Heart right ventricle (tissue), 16 donors: ENCODE measurements at regions of chr19 and their contacts with region 1.

Region 1: GRCh38 chr19:12400633-12401502 is at the start of gene ZNF799:
- DNase-seq: peak; percentile 97 to 99
- ATAC-seq: peak; percentile 99 to 100 (median 99)
- H3K4me3 ChIP-seq: peak within 1 kb of the TSS; percentile 61 to 94 (median 88)
- H3K27ac ChIP-seq: peak within 1 kb of the TSS; percentile 16 to 95 (median 87)
- H3K4me1 ChIP-seq: peaks cover 0 to 16% (median 7%) of the 10 kb centered on the region in 9 donors
- H3K27me3 ChIP-seq: no peaks in the 10 kb centered on the region
- CTCF ChIP-seq: peak in 4 of 9 donors; percentile 17 to 37 (median 26)
- total RNA-seq, gene ZNF799: 1.6 to 2.9 (median 2.0) TPM

Region 2: GRCh38 chr19:12333162-12334159 is 67.4 kb before region 1 on chr19 and contains the start of gene ZNF563:
- intact Hi-C with region 1: loop called in 1 of 10 experiments (anchors 2 kb)
- DNase-seq: peak; percentile 97 to 98
- ATAC-seq: peak; percentile 99 to 100 (median 99)
- H3K4me3 ChIP-seq: peak within 1 kb of the TSS; percentile 77 to 98 (median 87)
- H3K27ac ChIP-seq: peak within 1 kb of the TSS; percentile 74 to 98 (median 92)
- H3K4me1 ChIP-seq: peaks cover 0 to 29% (median 18%) of the 10 kb centered on the region in 9 donors
- H3K27me3 ChIP-seq: no peaks in the 10 kb centered on the region
- CTCF ChIP-seq: peak in 1 of 9 donors; percentile 5
- total RNA-seq, gene ZNF563: 2.1 to 6.2 (median 4.5) TPM

Region 3: GRCh38 chr19:12425236-12425887 is 24.5 kb after region 1 on chr19:
- intact Hi-C with region 1: no loop called
- DNase-seq: no peak
- ATAC-seq: no peak
- H3K4me3 ChIP-seq: no peak overlapping the region
- H3K27ac ChIP-seq: no peak overlapping the region
- H3K4me1 ChIP-seq: no peaks in the 10 kb centered on the region
- H3K27me3 ChIP-seq: no peaks in the 10 kb centered on the region
- CTCF ChIP-seq: no peak

Region 4: GRCh38 chr19:12440541-12441316 is 39.9 kb after region 1 on chr19 and contains the start of gene ZNF443:
- intact Hi-C with region 1: loop called in 3 of 10 experiments (anchors 2 to 5 kb)
- DNase-seq: peak; percentile 99
- ATAC-seq: peak; percentile 100
- H3K4me3 ChIP-seq: peak within 1 kb of the TSS; percentile 33 to 95 (median 71)
- H3K27ac ChIP-seq: peak within 1 kb of the TSS in 9 of 10 donors; percentile 72 to 83 (median 80)
- H3K4me1 ChIP-seq: peaks cover 0 to 12% (median 0%) of the 10 kb centered on the region in 9 donors
- H3K27me3 ChIP-seq: no peaks in the 10 kb centered on the region
- CTCF ChIP-seq: peak in 4 of 9 donors; percentile 12 to 24 (median 17)
- total RNA-seq, gene ZNF443: 1.2 to 3.4 (median 2.5) TPM

Region 5: DNA sequence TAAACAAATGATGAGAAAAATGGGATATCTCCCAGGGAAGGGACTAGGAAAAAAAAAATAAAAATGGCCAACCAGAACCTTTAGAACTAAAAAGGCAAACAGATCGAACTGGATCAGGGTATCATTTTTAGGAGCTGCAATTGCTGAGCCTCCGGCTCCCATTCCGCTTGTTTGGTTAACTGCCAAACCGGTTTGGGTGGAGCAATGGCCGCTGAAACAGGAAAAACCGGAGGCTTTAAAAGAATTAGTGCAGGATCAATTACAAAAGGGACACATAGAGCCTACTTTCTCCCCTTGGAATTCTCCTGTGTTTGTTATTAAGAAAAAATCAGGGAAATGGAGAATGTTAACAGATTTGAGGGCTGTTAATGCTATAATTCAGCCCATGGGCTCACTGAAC is 52.6 kb after region 1 on chr19:
- intact Hi-C with region 1: no loop called
- DNase-seq: no peak
- ATAC-seq: no peak
- H3K4me3 ChIP-seq: peak overlapping the region in 1 of 10 donors; percentile 0
- H3K27ac ChIP-seq: peak overlapping the region in 3 of 10 donors; percentile 37 to 64 (median 62)
- H3K4me1 ChIP-seq: peaks cover 0 to 11% (median 0%) of the 10 kb centered on the region in 9 donors
- H3K27me3 ChIP-seq: no peaks in the 10 kb centered on the region
- CTCF ChIP-seq: no peak

Region 6: DNA sequence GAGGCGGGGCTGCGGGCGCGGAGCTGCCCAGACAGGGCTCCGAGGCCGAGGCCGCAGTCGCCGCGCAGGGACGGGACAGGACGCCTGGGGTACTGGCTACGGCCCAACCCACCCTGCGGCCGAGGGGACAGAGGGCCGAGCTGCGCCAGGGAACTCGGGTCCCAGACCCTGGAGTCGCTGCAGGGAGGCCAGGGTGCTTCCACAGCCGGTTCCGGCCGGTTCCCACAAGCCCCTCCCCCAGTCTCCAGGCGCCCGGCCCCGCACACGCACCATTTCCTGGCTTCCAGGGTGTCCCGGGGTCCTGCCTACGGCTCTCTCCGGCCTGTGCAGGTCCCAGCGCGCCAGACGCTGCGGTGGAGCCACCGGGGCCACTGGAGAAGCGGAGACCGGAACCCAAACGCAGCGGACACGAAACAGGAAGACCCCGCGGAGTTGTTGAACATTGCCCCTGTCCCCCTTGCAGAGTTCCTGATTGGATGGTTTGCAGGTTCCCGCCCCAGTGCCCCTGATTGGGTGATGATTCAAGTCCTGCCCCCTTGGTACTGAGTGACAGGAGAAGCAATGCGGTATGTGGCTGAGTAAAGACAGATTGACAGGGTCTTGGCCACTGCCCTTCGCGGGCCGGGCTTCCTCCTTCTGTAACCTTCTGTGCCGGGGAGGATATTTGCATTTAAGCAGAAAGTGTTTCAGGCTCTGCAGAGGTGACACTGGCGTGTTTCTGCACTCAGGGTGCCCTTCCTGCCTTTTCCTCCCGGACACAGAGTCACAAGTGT is 150.4 kb after region 1 on chr19 and contains the start of gene ZNF564:
- intact Hi-C with region 1: loop called in 1 of 10 experiments (anchors 1 kb)
- DNase-seq: peak; percentile 89 to 98
- ATAC-seq: peak; percentile 97 to 99 (median 98)
- H3K4me3 ChIP-seq: peak within 1 kb of the TSS; percentile 68 to 95 (median 79)
- H3K27ac ChIP-seq: peak within 1 kb of the TSS; percentile 94 to 98 (median 95)
- H3K4me1 ChIP-seq: peaks cover 3 to 55% (median 37%) of the 10 kb centered on the region in 9 donors
- H3K27me3 ChIP-seq: peaks cover 0 to 5% (median 0%) of the 10 kb centered on the region in 7 donors
- CTCF ChIP-seq: no peak
- total RNA-seq, gene ZNF564: 5.9 to 11.2 (median 9.5) TPM